Panc1 (cell line): ENCODE measurements at regions of chr2 and their contacts with region 1.

Region 1: DNA sequence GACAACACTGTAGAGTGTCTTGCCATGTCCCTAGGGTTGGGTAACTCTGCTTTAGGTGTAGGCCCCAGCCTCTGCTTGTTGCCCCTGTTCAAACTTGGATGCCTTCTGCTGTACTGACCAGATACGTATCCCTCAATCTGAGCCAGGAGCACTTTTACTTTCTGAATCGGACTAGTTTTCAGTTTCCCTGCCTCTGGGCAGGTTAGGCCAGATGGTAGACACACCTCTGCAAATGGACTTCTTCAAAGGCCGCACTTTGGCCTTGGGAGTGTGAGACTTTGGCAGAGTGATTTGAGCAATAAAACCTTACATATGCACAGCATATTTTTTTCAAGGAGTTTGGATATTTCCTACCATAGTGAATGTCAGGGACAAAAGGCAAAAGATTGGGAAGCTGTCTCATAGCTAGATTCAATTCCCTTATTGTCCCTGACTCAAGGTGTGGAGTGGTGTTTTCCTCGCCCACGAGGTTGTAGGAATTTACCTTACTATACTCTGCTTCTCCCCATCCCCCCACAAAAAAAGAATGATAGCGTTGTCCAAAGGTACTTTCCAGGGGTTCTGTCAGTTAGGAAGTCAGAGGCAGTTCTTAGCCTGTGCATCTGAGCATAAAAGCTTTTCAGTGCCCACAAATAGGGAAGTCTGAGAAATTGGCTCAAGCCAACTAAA is 15.3 kb upstream of the PARD3B start:
- DNase-seq: no peak
- ATAC-seq: no peak
- H3K4me3 ChIP-seq: no peak overlapping the region
- H3K27ac ChIP-seq: no peak overlapping the region
- H3K4me1 ChIP-seq: no peaks in the 10 kb centered on the region
- H3K27me3 ChIP-seq: no peaks in the 10 kb centered on the region
- CTCF ChIP-seq: no peak

Region 2: GRCh38 chr2:204604061-204604460 is 74.1 kb after region 1 on chr2:
- CTCF ChIA-PET with region 1: interaction called, 13 read pairs
- POLR2A ChIA-PET with region 1: no interaction called
- in situ Hi-C with region 1: no loop called
- intact Hi-C with region 1: no loop called
- DNase-seq: no peak
- ATAC-seq: no peak
- H3K4me3 ChIP-seq: no peak overlapping the region
- H3K27ac ChIP-seq: no peak overlapping the region
- H3K4me1 ChIP-seq: no peaks in the 10 kb centered on the region
- H3K27me3 ChIP-seq: no peaks in the 10 kb centered on the region
- CTCF ChIP-seq: no peak